Activated CD4-positive, alpha-beta memory T cell treated with anti-CD3 and anti-CD28 coated beads for 36 hours (primary cell): ENCODE measurements at regions of chr1 and their contacts with region 1.

Region 1: DNA sequence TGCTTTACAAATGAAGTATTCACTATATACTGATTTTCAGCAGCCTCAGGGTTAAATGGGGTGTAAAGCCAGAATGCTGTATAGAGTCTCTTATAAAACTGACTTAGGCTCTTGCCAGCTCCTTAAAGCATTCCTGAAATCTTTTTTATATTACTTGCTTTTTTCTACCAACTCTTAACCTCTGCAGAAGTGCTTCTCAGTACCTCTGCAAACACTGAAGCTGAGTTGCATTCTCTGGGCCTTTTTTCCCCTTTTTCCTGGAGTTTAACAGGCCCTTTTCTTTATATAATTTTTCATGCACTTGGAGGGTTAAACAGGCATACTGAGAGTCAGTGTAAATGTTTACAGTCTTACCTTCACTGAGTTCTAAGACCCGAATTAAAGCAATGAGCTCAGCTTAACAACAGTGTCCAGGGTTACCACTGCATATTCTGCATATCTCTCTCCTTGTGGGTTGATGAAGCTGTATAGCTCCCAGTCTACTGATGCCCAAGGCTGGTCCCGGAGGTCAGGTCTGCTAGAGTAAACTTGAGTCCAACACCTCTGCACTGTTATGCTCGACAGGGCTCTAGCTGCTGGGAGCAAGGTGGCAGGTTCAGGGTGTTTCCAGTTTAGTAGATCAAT is 40.9 kb upstream of the CFAP126 start:
- DNase-seq: no peak
- H3K4me3 Mint-ChIP-seq: no peak overlapping the region
- H3K27ac Mint-ChIP-seq: peak overlapping the region; percentile 94
- H3K4me1 Mint-ChIP-seq: peaks cover 38% of the 10 kb centered on the region
- H3K27me3 Mint-ChIP-seq: no peaks in the 10 kb centered on the region

Region 2: GRCh38 chr1:161367684-161368400 is 40.7 kb before region 1 on chr1 and contains the start of gene CFAP126:
- CTCF ChIA-PET with region 1: no interaction called
- POLR2A ChIA-PET with region 1: no interaction called
- intact Hi-C with region 1: no loop called
- DNase-seq: peak; percentile 66
- H3K4me3 Mint-ChIP-seq: no peak within 1 kb of the TSS
- H3K27ac Mint-ChIP-seq: peak within 1 kb of the TSS; percentile 49
- H3K4me1 Mint-ChIP-seq: peaks cover 22% of the 10 kb centered on the region
- H3K27me3 Mint-ChIP-seq: no peaks in the 10 kb centered on the region
- total RNA-seq, gene CFAP126: 0.29 TPM in 1 of 2 experiments, not detected in the other

Region 3: DNA sequence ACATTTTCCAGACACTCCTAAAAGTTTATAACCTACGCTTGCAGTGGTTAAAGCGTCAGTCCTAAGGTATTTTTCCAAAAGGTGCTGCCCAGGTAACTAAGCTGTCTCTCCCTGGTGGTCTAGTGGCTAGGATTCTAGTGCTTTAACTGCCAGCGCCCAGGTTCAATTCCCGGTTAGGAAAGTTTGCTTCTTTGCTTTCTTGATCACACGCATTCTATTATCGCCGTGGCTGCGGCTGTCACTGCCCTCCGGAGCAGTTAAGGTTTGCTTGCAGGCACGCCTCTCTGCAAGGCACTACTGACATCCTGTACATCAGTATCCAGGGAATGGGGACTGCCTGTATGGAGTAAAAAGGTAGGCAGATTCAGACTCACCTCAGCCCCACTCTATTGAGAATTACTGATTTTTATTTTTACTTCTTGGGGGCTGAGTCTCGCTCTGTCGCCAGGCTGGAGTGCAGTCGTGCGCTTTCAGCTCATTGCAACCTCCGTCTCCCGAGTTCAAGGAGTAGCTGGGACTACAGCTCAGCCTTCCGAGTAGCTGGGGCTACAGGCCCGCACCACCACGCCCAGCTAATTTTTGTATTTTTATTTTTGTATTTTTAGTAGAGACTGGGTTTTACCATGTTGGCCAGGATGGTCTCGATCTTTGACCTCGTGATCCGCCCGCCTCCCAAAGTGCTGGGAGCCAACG is 12.4 kb after region 1 on chr1:
- CTCF ChIA-PET with region 1: no interaction called
- POLR2A ChIA-PET with region 1: no interaction called
- intact Hi-C with region 1: loop called (anchors 1 kb)
- DNase-seq: no peak
- H3K4me3 Mint-ChIP-seq: no peak overlapping the region
- H3K27ac Mint-ChIP-seq: no peak overlapping the region
- H3K4me1 Mint-ChIP-seq: peaks cover 16% of the 10 kb centered on the region
- H3K27me3 Mint-ChIP-seq: peaks cover 5% of the 10 kb centered on the region